Heart left ventricle (tissue), 16 donors: ENCODE measurements at regions of chr3 and their contacts with region 1.

Region 1: GRCh38 chr3:184777336-184778004 is 34.5 kb upstream of the VPS8 start:
- DNase-seq: peak; percentile 78 to 92 (median 88)
- ATAC-seq: peak; percentile 83 to 89 (median 88)
- H3K4me3 ChIP-seq: no peak overlapping the region
- H3K27ac ChIP-seq: no peak overlapping the region
- H3K4me1 ChIP-seq: peaks cover 0 to 21% (median 8%) of the 10 kb centered on the region in 12 donors
- H3K27me3 ChIP-seq: peaks cover 0 to 16% (median 4%) of the 10 kb centered on the region in 9 donors
- CTCF ChIP-seq: peak; percentile 75 to 91 (median 87)
- POLR2A ChIP-seq: no peak

Region 2: DNA sequence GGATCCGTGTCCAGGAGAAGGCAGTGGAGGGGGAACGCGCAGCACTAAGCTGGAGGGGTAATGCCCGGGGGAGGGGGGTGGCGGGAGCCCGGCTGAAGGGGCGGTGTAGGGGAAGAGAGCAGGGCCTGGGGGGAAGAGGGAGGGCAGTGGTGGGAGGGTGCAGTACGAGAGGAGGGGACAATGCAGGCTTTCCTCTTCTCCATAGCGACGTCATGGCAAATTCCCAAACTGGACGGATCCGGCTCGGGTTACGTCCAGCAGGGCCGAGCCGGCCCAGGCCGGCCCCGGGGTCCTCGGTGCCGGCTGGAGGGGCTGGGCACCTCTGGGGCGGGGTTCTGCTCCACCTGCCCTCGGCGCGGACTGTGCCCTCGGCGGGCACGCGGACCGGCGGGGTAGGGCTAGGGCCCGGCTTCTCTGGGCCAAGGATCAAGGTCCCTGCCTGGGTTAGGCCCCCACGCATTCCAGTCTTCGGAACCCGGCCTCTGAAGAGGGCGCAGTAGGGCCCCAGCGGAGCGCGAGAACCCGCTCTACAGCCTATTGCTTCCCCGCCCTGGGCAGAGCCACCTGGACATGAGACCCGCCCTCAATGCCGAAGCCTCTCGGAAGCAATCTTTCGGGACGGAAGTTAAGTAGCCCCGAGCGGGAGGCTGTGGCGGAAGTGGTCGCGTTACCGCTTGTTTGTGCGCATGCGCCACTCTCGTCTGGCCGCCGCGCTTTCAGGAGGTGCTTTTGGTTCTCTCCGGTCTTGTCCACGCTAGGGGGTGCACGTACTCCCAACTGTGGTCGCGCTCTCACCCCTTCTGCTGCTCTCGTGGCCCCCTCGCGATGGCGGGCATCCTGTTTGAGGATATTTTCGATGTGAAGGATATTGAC is 414.6 kb before region 1 on chr3:
- intact Hi-C with region 1: loop called in 2 of 10 experiments (anchors 5 to 10 kb)
- DNase-seq: peak; percentile 95 to 97 (median 97)
- ATAC-seq: peak; percentile 77 to 85 (median 79)
- H3K4me3 ChIP-seq: peak overlapping the region; percentile 63 to 100 (median 91)
- H3K27ac ChIP-seq: peak overlapping the region; percentile 97 to 100 (median 100)
- H3K4me1 ChIP-seq: peaks cover 0 to 31% (median 22%) of the 10 kb centered on the region in 12 donors
- H3K27me3 ChIP-seq: no peaks in the 10 kb centered on the region
- CTCF ChIP-seq: peak in 11 of 12 donors; percentile 35 to 80 (median 63)
- POLR2A ChIP-seq: peak in 1 of 2 donors; percentile 83

Region 3: DNA sequence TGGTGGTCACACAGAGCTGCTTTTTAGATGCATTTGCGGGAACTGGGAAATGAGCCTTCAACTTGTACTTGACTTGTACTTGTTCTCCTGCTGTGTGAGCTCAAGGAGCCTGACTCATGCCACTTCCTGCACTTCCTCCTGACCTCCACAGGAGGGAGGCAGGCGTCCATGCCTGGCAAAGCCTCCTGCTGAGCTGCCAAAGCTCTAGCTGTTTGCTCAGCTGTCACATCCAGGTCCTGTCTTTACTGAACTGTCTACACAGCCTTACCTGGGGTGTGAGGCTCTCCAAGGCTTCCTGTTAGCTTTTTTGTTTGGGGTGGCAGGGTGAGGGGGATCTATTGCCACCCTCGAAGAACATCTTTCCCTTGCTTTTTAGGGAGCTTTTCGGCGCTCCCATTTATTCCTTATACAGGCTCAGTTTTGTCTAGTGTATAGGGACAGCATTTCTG is 405.9 kb before region 1 on chr3:
- intact Hi-C with region 1: loop called in 4 of 10 experiments (anchors 5 to 10 kb)
- DNase-seq: peak; percentile 71 to 88 (median 85)
- ATAC-seq: peak; percentile 78 to 91 (median 87)
- H3K4me3 ChIP-seq: no peak overlapping the region
- H3K27ac ChIP-seq: peak overlapping the region in 1 of 12 donors; percentile 10
- H3K4me1 ChIP-seq: peaks cover 0 to 32% (median 17%) of the 10 kb centered on the region in 12 donors
- H3K27me3 ChIP-seq: peaks cover 0 to 11% (median 4%) of the 10 kb centered on the region in 9 donors
- CTCF ChIP-seq: peak; percentile 88 to 97 (median 94)
- POLR2A ChIP-seq: no peak

Region 4: GRCh38 chr3:184561061-184561912 is 216.2 kb before region 1 on chr3 and contains the start of gene EPHB3:
- intact Hi-C with region 1: loop called in 9 of 10 experiments (anchors 1 kb)
- DNase-seq: peak; percentile 99 to 100 (median 99)
- ATAC-seq: peak; percentile 96 to 98 (median 98)
- H3K4me3 ChIP-seq: peak within 1 kb of the TSS; percentile 41 to 82 (median 66)
- H3K27ac ChIP-seq: peak within 1 kb of the TSS in 8 of 12 donors; percentile 29 to 73 (median 60)
- H3K4me1 ChIP-seq: peaks cover 0 to 44% (median 22%) of the 10 kb centered on the region in 12 donors
- H3K27me3 ChIP-seq: peaks cover 0 to 25% (median 4%) of the 10 kb centered on the region in 9 donors
- CTCF ChIP-seq: peak; percentile 91 to 100 (median 100)
- POLR2A ChIP-seq: peak; percentile 76 to 95
- total RNA-seq, gene EPHB3: 1.00 to 4.6 (median 2.4) TPM

Region 5: DNA sequence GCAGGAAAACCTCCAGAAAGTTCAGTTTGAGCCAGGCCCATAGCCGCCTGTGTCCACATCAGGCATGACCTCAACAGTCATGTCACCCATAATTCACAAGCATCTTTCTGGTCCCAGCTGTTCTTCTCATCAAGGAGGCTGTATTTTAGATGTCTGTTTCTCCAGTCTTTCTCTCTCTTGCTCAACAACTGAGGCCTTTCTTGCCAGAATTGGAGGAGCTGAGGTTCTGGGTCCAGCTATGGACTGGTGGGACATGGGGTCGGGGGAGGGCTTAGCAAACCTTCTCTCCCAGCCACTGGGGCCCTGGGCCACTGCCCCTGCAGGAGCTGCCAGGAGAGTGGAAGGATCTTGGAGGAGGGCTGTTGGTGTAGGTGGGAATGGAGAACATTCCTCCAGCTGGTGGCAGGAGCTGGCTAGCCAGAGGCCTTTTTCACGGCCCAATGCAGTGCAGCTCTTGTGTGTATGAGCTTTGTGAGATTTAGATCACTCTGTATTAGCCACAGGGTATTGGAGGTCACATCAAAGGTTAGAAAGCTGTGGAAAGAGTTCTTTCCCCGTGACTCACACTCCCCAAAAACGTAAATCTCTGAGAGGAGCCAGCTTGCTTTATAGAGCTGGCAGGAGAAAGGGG is 89.1 kb before region 1 on chr3:
- intact Hi-C with region 1: no loop called
- DNase-seq: peak in 1 of 5 donors; percentile 50
- ATAC-seq: peak; percentile 15 to 80 (median 60)
- H3K4me3 ChIP-seq: no peak overlapping the region
- H3K27ac ChIP-seq: peak overlapping the region in 11 of 12 donors; percentile 7 to 79 (median 51)
- H3K4me1 ChIP-seq: peaks cover 0 to 57% (median 26%) of the 10 kb centered on the region in 12 donors
- H3K27me3 ChIP-seq: no peaks in the 10 kb centered on the region
- CTCF ChIP-seq: no peak
- POLR2A ChIP-seq: no peak

Region 6: DNA sequence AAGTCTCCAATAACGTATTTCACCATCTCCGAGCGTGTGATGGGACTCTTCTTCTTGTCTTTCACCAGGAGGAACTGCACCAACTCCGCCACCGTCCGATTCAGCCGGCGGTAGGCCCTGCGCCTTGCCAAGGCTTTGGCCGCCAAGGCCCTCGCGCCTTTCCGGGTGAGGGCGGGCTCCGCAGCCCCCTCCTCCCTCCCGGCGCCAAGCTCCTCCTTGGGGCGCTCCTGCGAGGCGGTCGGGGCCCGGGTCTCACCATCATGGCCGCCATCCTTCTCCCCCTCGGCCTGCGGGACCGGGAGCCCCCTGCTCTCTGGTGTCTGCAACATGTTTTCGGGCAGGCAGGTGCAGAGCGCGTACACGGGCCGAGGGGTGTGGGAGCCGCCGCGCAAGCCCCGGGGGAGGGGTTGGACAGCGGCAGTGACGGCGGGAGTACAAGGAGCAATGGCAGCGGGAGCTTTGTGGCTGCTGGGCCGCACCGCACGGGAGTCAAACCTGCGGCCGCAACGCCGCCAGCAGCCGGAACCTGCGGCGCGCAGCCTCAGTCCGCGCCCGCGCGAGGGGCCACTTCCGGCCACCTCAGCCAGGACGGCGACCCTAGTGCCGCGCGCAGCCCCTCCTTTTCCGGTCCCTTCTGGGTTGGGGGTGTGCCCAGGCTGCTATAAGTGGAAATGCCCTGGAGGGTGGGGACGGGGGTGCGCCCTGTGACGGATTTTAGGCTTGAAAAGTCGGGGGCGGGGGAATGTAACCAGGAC is 65.8 kb before region 1 on chr3 and contains the start of gene MAGEF1:
- intact Hi-C with region 1: loop called in 2 of 10 experiments (anchors 5 kb)
- DNase-seq: peak; percentile 86 to 92 (median 91)
- ATAC-seq: peak; percentile 95 to 97 (median 95)
- H3K4me3 ChIP-seq: peak within 1 kb of the TSS; percentile 48 to 98 (median 90)
- H3K27ac ChIP-seq: peak within 1 kb of the TSS; percentile 65 to 98 (median 94)
- H3K4me1 ChIP-seq: peaks cover 0 to 49% (median 31%) of the 10 kb centered on the region in 12 donors
- H3K27me3 ChIP-seq: no peaks in the 10 kb centered on the region
- CTCF ChIP-seq: peak in 2 of 12 donors; percentile 6 to 7
- POLR2A ChIP-seq: peak in 1 of 2 donors; percentile 86
- total RNA-seq, gene MAGEF1: 27.1 to 36.4 (median 32.6) TPM

Region 7: DNA sequence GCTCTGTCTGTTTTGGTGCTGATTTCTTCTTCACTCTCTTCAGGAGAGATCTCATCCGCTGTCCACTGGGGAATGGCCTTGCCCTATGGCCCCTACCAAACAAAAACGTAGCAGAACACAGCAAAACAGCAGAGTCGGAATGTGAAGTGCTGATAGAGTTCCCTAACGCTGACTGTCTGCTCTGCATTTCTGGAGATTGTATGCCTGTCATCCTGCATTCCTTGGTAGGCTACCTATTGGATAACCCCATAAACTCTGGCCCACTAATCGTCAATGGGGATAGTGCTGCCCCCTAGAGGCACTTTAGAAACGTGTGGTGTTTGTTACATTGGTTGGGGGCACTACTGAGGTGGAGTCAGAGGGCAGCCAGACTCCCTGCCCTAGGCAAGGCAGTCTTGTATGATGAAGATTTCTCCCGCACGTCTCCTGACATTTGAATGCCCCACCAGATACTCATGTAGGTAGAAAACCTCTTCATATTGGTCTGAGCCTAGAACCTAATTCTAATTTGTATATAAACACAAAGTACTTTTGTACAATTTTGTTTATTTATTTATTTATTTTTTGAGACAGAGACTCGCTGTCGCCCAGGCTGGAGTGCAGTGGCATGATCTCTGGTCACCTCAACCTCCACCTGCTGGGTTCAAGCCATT is 50.0 kb before region 1 on chr3:
- intact Hi-C with region 1: loop called in 6 of 10 experiments (anchors 2 to 5 kb)
- DNase-seq: peak in 4 of 5 donors; percentile 50 to 66 (median 62)
- ATAC-seq: peak; percentile 58 to 95 (median 86)
- H3K4me3 ChIP-seq: no peak overlapping the region
- H3K27ac ChIP-seq: no peak overlapping the region
- H3K4me1 ChIP-seq: peaks cover 0 to 13% (median 4%) of the 10 kb centered on the region in 12 donors
- H3K27me3 ChIP-seq: no peaks in the 10 kb centered on the region
- CTCF ChIP-seq: peak; percentile 66 to 82 (median 72)
- POLR2A ChIP-seq: no peak

Region 8: DNA sequence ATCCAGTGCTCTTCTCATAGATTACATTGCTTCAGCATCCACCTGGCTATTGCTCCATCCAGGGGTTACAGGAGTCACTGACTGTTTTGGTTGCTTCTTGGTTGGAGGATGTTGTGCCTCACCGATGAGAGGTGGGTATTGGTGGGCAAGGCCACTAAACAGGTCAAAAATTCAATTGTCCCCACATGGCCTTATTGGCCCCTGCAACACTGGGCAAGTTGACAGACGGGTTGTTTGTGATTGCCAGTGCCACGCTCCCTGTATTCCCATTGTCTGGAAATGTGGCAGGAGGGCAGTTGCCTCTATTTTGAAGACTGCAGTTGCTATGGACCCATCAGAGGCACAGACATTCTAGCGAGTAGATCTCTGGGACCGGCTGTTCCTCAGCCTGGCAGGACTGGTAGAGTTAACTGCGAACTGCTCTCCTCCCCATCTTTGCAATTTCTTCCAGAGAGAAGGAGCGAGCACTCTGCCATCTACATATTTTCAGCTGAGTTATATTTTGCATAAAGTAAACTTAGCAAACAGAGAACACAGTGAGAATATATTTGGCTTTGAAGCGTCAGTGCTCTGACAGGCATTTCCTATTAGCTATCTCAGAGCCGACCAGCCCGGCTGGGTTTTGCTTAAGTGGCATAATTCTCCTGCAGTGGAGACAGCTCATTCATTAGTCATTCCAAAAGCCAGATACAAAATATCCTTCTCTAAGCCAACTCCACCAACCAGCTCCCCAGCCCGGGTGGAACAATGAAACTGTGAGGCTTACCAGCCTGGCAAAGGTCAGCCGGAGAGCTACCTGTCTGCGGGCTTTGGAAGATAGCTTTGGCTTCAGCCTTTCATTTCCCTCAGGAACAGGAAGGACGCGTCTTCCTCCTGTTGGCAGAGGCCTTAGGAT is 39.6 kb before region 1 on chr3:
- intact Hi-C with region 1: loop called in 3 of 10 experiments (anchors 5 kb)
- DNase-seq: peak in 1 of 5 donors; percentile 12
- ATAC-seq: peak in 2 of 4 donors; percentile 28 to 38
- H3K4me3 ChIP-seq: no peak overlapping the region
- H3K27ac ChIP-seq: no peak overlapping the region
- H3K4me1 ChIP-seq: peaks cover 0 to 9% (median 0%) of the 10 kb centered on the region in 12 donors
- H3K27me3 ChIP-seq: no peaks in the 10 kb centered on the region
- CTCF ChIP-seq: no peak
- POLR2A ChIP-seq: no peak